ENCODE measurements at regions of chr11 and their contacts with region 1.

Region 1: DNA sequence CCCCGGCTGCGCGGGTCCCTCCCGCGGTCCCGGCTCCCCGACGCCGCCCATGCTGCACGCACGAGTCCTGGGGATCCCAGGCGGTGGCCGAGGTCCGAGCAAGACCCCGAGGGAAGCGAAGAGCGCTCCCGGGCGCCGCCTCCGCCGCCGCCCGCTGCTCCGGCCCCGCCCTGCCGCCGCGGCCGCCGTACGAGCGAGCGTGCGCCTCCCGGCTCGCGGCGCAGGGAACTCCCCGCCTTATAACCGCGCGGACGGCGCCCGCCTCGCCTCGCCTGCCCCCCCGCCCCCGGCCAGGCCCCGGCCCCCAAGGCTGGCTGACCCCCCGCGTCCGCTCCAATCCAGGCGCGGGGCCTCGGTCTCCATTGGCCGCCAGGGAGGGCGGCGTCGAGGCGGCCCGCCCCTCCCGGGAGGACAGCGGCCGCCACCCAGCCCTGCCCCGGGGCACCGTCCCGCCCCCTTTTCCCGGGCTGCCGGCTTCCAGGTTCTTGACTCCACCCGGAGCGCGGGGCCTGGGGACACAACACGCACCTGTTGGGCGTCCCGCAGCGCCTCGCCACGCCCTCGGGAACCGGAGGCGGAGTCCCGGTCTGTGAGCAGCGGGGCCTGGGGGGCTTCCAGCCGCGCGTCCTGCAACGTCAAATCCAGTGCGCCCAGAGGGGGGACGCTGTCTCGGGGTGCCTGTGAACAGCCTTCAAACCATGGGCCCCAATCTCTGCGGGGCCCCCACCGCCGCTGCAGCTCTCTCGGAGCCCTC is at the start of gene FADS3:
- DNase-seq: peak; percentile 89 to 95
- ATAC-seq: peak; percentile 91
- H3K4me3 ChIP-seq: peak within 1 kb of the TSS; percentile 43 to 44
- H3K27ac ChIP-seq: peak within 1 kb of the TSS; percentile 0 to 87
- H3K4me1 ChIP-seq: no peaks in the 10 kb centered on the region
- H3K27me3 ChIP-seq: no peaks in the 10 kb centered on the region
- total RNA-seq, gene FADS3: 120 to 180 TPM

Region 2: DNA sequence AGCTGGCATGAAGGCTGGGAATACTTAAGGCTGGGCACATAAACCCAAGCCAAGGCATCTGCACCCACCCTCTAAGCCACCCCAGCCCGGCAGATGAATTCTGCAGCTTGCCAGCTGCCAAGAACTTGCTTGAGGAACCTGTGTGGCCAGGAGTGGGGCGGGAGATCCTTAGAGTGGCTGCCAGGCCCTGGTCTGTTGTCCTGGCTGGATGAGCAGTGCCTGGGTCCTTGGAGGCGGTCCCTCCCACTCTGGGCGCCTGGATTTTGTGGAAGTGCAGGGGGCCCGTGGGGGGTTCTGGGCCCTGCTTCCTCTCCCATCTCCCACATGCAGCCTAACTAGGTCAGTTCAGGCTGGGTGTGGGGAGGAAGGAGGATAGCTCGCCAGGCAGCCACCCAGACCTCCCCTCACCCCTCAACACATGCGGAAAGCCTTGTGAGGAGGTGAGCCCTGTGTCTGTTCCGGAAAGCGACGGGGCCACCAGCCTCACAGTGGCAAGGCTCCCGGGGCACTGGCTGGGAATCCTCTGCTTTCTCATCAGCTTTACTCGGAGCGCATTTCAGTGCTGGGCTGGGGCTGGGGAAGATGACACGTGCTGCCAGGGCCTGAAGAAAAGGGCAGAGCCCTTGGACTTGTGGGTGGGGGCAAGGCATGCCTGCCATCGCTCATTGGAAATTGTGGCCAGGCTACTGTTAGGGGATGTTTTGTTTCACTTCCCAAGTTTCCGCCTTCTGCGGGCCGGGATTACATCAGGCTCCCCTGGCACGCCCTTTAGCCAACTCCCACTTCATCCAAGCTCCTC is 202.9 kb before region 1 on chr11:
- intact Hi-C with region 1: no loop called
- DNase-seq: peak; percentile 86
- ATAC-seq: peak; percentile 84
- H3K4me3 ChIP-seq: no peak overlapping the region
- H3K27ac ChIP-seq: no peak overlapping the region
- H3K4me1 ChIP-seq: no peaks in the 10 kb centered on the region
- H3K27me3 ChIP-seq: no peaks in the 10 kb centered on the region

Region 3: DNA sequence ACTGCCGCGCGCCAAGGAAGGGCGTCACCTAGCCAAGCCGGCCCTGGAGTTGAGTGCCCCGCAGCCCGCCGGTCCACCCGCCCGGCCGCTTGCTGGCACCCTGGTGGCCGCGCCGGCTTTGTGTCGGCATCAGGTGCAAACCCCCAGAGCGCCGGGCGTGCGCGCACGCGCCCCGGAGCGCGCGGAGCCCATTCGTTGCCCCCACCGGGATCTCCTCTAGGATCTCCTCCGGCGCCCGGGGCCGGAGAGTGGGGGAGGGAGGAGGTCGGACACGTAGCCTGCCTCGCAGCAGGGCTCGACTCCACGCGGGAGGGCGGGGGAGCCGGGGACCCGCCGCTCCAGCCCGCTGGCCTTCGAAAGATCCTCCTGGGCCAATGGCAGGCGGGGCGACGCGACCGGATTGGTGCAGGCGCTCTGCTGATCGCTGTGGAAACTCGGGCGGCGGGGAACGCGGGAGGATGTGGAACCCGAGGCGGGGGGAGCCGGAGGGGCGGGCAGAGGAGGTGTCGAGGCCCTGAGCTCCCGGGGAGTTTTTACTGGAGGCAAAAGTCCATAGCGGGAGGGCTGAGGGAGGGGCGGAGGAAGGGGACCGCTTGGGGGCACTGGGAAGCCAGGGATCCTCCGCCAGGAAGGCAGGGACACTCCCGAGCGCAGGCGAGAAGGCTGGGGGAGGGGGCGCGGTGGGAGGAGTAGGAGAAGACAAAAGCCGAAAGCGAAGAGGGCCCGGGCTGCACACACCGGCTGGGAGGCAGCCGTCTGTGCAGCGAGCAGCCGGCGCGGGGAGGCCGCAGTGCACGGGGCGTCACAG is 63.7 kb before region 1 on chr11 and contains the start of gene FADS2:
- intact Hi-C with region 1: loop called in 1 of 2 experiments (anchors 5 kb)
- DNase-seq: peak; percentile 98 to 99
- ATAC-seq: peak; percentile 89
- H3K4me3 ChIP-seq: peak within 1 kb of the TSS; percentile 61 to 67
- H3K27ac ChIP-seq: peak within 1 kb of the TSS; percentile 48 to 88
- H3K4me1 ChIP-seq: no peaks in the 10 kb centered on the region
- H3K27me3 ChIP-seq: no peaks in the 10 kb centered on the region
- total RNA-seq, gene FADS2: 89.7 to 167 TPM

Region 4: DNA sequence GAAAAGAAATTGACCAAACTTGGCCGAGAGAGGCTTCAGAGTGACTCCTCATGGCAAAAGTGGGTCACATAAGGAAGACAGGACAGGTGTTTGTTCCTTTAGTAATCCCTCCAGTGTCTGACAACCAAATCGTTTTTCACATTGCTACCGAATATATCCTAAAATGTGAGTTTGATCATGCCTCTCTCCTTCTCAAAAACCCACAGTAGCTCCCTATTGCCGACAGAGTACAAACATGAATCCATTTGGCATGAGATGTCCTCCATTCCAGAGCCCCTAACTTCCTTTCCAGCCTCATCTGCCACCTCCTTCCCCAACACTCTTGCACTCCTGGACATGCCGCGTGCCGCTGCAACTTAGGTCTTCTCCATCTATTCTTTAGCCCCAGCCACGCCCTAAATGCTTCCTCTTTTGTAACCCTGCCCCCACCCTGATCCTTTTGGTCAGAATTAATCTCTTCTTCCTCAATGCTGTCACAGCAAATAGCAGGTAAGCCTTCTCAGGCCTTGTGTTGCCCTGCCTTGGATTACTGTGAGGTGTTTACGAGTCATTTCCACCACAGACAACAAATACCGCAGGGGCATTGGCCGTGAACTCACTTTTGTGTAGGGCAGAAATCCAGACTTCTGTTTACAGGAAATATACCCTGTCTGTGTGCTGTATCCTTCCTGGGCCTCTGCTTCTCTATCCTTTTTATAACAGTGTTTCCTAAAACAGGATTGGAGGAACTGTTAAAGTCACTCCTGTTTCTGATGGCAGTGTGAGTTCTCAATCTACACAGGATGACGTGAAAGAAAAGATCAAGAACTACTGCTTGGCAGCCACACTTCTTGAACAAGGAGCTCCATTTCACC is 141.9 kb after region 1 on chr11:
- intact Hi-C with region 1: no loop called
- DNase-seq: no peak
- ATAC-seq: no peak
- H3K4me3 ChIP-seq: no peak overlapping the region
- H3K27ac ChIP-seq: no peak overlapping the region
- H3K4me1 ChIP-seq: no peaks in the 10 kb centered on the region
- H3K27me3 ChIP-seq: no peaks in the 10 kb centered on the region

Region 5: DNA sequence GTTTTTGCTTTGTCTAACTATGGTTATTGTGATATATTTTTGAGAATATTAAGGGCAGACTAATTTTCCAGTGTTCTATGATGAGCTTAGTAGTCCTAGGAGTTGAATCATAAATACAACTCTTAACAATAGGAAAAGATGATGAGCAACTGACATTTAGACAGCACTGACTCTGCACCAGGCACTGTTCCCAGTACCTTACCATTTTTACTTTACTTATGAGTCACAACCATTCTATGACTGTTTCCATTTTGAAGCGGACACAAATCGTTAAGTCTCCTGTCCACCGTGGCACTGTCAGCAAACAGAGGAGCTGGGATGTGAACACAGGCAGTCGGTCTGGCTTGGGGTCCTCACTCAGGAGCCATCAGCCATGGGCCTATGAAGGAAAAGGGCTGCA is 375.1 kb after region 1 on chr11:
- intact Hi-C with region 1: no loop called
- DNase-seq: no peak
- ATAC-seq: no peak
- H3K4me3 ChIP-seq: no peak overlapping the region
- H3K27ac ChIP-seq: no peak overlapping the region
- H3K4me1 ChIP-seq: no peaks in the 10 kb centered on the region
- H3K27me3 ChIP-seq: peaks cover 0 to 3% of the 10 kb centered on the region in 2 donors

Measured in aorta (tissue), 5 donors.